PC-9 (cell line): ENCODE measurements at regions of chr7 and their contacts with region 1.

Region 1: DNA sequence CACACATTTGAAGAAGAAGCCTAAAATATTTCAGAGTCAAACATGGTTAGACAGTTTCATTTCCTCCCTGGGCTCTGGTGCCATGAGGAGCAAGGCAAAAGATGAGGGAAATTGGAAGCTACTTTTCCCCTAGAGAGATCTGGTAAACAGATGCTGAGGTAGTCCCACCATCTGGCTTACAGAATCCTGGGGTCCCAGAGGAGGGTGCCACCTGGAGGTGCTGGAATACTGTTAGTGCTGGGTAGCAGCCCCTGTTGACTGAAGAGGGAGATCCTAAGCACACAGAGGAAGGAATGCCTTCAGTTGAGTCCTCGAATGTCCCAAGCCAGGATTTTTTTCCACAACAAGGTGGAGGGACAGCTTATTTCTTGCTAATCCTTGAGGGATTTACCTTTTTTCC is 160.1 kb downstream of the FZD1 start:
- DNase-seq: no peak
- H3K4me3 ChIP-seq: no peak overlapping the region
- H3K27ac ChIP-seq: no peak overlapping the region
- H3K4me1 ChIP-seq: no peaks in the 10 kb centered on the region
- H3K27me3 ChIP-seq: no peaks in the 10 kb centered on the region
- CTCF ChIP-seq: no peak

Region 2: DNA sequence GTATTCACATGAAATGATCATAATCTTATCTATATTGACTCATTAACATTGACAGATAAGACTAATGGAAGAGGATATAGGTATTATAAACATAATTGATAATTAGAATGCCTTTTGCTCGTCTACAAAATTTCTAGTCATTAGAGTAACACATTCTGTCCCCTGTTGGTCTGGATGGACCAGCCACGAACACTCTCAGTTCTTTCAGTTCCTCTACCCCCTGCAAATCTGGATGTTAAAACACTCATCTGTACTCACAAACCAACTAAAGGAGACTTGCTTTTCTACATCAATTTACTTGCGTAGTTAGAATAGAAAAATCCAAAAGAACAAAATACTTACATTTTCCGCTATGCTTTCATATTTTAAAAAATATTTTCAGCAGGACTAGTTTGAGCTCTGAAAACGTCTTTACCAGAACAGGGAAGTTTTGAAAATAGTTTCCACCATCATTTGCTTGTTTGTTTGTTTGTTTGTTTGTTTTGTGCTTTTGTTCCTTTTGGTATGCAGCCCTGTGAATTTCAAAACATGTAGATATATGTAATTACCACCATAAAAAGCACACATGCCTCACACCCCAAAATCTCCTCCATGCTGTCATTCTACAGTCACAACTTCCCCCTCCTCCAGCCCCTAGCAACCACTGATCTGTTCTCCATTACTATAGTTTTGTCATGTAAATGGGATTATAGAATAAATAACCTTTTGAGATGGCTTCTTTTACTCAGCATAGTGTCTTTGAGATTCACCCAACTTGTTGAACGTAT is 56.4 kb before region 1 on chr7:
- CTCF ChIA-PET with region 1: no interaction called
- POLR2A ChIA-PET with region 1: interaction called, 29 read pairs
- intact Hi-C with region 1: no loop called
- DNase-seq: no peak
- H3K4me3 ChIP-seq: no peak overlapping the region
- H3K27ac ChIP-seq: no peak overlapping the region
- H3K4me1 ChIP-seq: no peaks in the 10 kb centered on the region
- H3K27me3 ChIP-seq: no peaks in the 10 kb centered on the region
- CTCF ChIP-seq: no peak